Activated CD8-positive, alpha-beta T cell treated with anti-CD3 and anti-CD28 coated beads, Interleukin-2, amount 10 ng/mL, durations not matched to agents 7 days and 5 days (primary cell): ENCODE measurements at regions of chr6 and their contacts with region 1.

Region 1: GRCh38 chr6:42547407-42548329 is 16.2 kb upstream of the UBR2 start:
- DNase-seq: peak; percentile 90
- ATAC-seq: peak; percentile 100
- H3K4me3 Mint-ChIP-seq: peak overlapping the region; percentile 57
- H3K27ac Mint-ChIP-seq: no peak overlapping the region
- H3K4me1 Mint-ChIP-seq: peaks cover 13% of the 10 kb centered on the region
- H3K27me3 Mint-ChIP-seq: peaks cover 12% of the 10 kb centered on the region

Region 2: GRCh38 chr6:40937491-40937890 is 1610.2 kb before region 1 on chr6:
- CTCF ChIA-PET with region 1: no interaction called
- POLR2A ChIA-PET with region 1: no interaction called
- DNase-seq: no peak
- ATAC-seq: no peak
- H3K4me3 Mint-ChIP-seq: no peak overlapping the region
- H3K27ac Mint-ChIP-seq: no peak overlapping the region
- H3K4me1 Mint-ChIP-seq: no peaks in the 10 kb centered on the region
- H3K27me3 Mint-ChIP-seq: peaks cover 20% of the 10 kb centered on the region

Region 3: DNA sequence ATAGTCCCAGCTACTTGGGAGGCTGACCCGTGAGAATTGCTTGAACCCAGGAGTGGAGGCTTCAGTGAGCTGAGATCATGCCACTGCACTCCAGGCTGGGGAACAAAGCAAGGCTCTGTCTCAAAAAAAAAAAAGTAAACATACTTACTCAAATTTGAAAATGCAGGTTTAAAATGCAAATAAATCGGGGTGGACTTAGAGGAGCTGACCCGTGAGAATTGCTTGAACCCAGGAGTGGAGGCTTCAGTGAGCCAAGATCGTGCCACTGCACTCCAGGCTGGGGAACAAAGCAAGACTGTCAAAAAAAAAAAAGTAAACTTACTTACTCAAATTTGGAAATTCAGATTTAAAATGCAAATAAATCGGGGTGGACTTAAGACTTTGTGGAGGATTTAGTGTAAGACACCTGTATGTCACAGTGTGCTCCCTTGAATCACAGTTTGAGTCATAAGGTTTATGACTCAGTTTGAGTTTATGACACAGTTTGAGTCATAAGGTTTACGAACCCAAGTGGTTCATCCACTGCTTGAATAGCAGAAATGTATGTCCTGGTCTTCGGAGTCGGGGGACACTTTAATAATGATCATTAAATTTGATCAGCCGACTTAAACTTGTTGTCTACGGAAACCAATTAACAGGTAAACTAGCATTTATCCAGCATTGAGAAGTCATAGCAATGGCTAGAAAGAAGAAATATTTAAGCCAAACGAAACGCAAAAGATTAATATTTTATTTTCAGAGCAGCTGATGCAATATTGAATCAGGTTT is 323.3 kb before region 1 on chr6:
- CTCF ChIA-PET with region 1: interaction called, 19 read pairs
- POLR2A ChIA-PET with region 1: no interaction called
- DNase-seq: no peak
- ATAC-seq: no peak
- H3K4me3 Mint-ChIP-seq: no peak overlapping the region
- H3K27ac Mint-ChIP-seq: no peak overlapping the region
- H3K4me1 Mint-ChIP-seq: peaks cover 6% of the 10 kb centered on the region
- H3K27me3 Mint-ChIP-seq: no peaks in the 10 kb centered on the region

Region 4: GRCh38 chr6:42345696-42346416 is 201.8 kb before region 1 on chr6:
- CTCF ChIA-PET with region 1: interaction called, 15 read pairs
- POLR2A ChIA-PET with region 1: no interaction called
- DNase-seq: peak; percentile 66
- ATAC-seq: peak; percentile 95
- H3K4me3 Mint-ChIP-seq: peak overlapping the region; percentile 61
- H3K27ac Mint-ChIP-seq: peak overlapping the region; percentile 91
- H3K4me1 Mint-ChIP-seq: peaks cover 61% of the 10 kb centered on the region
- H3K27me3 Mint-ChIP-seq: no peaks in the 10 kb centered on the region

Region 5: DNA sequence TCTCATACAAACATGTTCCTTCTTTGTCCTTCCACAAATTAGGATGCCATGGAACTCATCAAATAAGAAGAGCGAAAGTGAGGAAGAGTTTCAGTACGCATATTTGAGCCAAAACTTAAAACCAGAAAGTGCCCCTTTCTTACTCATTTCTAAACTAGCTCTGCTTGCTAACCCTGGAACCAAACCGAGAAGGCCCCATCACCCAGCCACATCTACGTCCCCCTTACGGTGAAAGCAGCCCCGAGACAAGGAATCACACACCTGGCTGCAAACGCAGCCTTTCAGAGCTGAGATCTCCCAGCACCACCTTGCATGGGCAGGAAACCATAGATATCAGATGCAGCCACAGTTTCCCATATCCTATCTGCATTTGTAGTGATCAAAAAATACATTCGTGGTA is 124.4 kb before region 1 on chr6:
- CTCF ChIA-PET with region 1: interaction called, 21 read pairs
- POLR2A ChIA-PET with region 1: no interaction called
- DNase-seq: peak; percentile 51
- ATAC-seq: peak; percentile 63
- H3K4me3 Mint-ChIP-seq: peak overlapping the region; percentile 58
- H3K27ac Mint-ChIP-seq: peak overlapping the region; percentile 60
- H3K4me1 Mint-ChIP-seq: peaks cover 50% of the 10 kb centered on the region
- H3K27me3 Mint-ChIP-seq: peaks cover 2% of the 10 kb centered on the region

Region 6: DNA sequence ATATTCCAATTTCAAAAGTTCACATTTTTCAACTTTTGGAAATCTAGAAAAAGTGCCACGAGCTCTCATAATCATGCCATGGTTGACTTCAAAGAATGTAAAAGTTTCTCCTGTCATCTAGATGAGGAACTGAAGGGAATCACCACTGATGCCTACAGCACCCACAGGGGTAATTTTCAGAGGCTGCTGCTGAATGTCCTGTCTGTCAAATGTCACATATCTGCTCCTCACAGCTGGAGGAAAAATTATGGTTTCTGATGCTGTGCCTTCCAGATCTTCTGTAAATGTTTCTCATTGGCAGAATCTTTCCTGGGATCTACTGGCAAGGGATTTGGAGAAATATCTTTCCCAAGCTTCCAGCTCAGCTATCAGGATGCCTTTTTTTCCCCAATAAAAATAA is 63.4 kb before region 1 on chr6:
- CTCF ChIA-PET with region 1: interaction called, 11 read pairs
- POLR2A ChIA-PET with region 1: no interaction called
- DNase-seq: no peak
- ATAC-seq: no peak
- H3K4me3 Mint-ChIP-seq: no peak overlapping the region
- H3K27ac Mint-ChIP-seq: no peak overlapping the region
- H3K4me1 Mint-ChIP-seq: no peaks in the 10 kb centered on the region
- H3K27me3 Mint-ChIP-seq: peaks cover 6% of the 10 kb centered on the region

Region 7: GRCh38 chr6:42572523-42572922 is 24.9 kb after region 1 on chr6:
- CTCF ChIA-PET with region 1: interaction called, 14 read pairs
- POLR2A ChIA-PET with region 1: interaction called, 3 read pairs
- DNase-seq: no peak
- ATAC-seq: peak; percentile 63
- H3K4me3 Mint-ChIP-seq: peak overlapping the region; percentile 35
- H3K27ac Mint-ChIP-seq: peak overlapping the region; percentile 73
- H3K4me1 Mint-ChIP-seq: peaks cover 38% of the 10 kb centered on the region
- H3K27me3 Mint-ChIP-seq: no peaks in the 10 kb centered on the region